CD14-positive monocyte (primary cell): ENCODE measurements at regions of chr11 and their contacts with region 1.

Region 1: GRCh38 chr11:94623120-94623735 is 56.1 kb downstream of the PIWIL4 start:
- DNase-seq: peak; percentile 58 to 73 (median 71)
- H3K4me3 ChIP-seq: no peak overlapping the region
- H3K4me3 Mint-ChIP-seq: peak overlapping the region in 1 of 2 donors; percentile 49
- H3K27ac ChIP-seq: no peak overlapping the region
- H3K27ac Mint-ChIP-seq: peak overlapping the region in 4 of 7 donors; percentile 7 to 78 (median 50)
- H3K4me1 ChIP-seq: no peaks in the 10 kb centered on the region
- H3K4me1 Mint-ChIP-seq: peaks cover 2% of the 10 kb centered on the region
- H3K27me3 ChIP-seq: no peaks in the 10 kb centered on the region
- H3K27me3 Mint-ChIP-seq: no peaks in the 10 kb centered on the region
- CTCF ChIP-seq: peak; percentile 85

Region 2: GRCh38 chr11:94897330-94897768 is 274.1 kb after region 1 on chr11:
- intact Hi-C with region 1: loop called (anchors 2 kb)
- DNase-seq: peak; percentile 27 to 49 (median 44)
- H3K4me3 ChIP-seq: no peak overlapping the region
- H3K4me3 Mint-ChIP-seq: no peak overlapping the region
- H3K27ac ChIP-seq: no peak overlapping the region
- H3K27ac Mint-ChIP-seq: no peak overlapping the region
- H3K4me1 ChIP-seq: no peaks in the 10 kb centered on the region
- H3K4me1 Mint-ChIP-seq: peaks cover 2% of the 10 kb centered on the region
- H3K27me3 ChIP-seq: no peaks in the 10 kb centered on the region
- H3K27me3 Mint-ChIP-seq: no peaks in the 10 kb centered on the region
- CTCF ChIP-seq: peak; percentile 96